ENCODE measurements at regions of chr9 and their contacts with region 1.

Region 1: DNA sequence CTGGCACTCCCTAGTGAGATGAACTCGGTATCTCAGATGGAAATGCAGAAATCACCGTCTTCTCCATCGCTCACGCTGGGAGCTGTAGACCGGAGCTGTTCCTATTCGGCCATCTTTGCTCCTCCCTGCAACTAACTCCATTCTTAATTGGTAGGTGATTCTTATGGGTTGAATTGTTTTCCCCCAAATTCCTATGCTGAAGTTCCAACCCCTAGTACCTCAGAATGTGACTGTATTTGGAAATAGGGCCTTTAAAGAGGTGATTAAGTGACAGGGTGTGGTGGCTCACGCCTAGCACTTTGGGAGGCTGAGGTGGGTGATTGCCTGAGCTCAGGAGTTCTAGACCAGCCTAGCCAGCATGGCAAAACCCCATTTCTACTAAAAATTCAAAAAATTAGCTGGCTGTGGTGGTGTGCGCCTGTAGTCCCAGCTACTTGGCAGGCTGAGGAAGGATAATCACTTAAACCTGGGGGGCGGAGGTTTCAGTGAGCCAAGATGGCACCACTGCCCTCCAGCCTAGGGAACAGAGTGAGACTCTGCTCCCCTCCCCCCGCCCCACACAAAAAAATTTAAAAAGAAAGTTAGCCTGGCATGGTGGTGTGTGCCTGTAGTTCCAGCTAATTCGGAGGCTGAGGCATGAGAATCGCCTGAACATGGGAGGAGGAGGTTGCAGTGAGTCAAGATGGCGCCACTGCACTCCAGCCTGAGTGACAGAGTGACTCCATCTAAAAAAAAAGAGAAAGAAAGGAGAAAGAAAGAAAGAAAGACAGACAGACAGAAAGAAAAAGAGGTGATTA is 25.2 kb upstream of the FOCAD start:
- DNase-seq: no peak
- ATAC-seq: peak; percentile 56
- H3K4me3 ChIP-seq: peak overlapping the region; percentile 76
- H3K27ac ChIP-seq: peak overlapping the region; percentile 88
- H3K4me1 ChIP-seq: no peaks in the 10 kb centered on the region
- H3K27me3 ChIP-seq: no peaks in the 10 kb centered on the region
- CTCF ChIP-seq: no peak
- EP300 ChIP-seq: no peak
- POLR2A ChIP-seq: no peak
- RAD21 ChIP-seq: no peak

Region 2: DNA sequence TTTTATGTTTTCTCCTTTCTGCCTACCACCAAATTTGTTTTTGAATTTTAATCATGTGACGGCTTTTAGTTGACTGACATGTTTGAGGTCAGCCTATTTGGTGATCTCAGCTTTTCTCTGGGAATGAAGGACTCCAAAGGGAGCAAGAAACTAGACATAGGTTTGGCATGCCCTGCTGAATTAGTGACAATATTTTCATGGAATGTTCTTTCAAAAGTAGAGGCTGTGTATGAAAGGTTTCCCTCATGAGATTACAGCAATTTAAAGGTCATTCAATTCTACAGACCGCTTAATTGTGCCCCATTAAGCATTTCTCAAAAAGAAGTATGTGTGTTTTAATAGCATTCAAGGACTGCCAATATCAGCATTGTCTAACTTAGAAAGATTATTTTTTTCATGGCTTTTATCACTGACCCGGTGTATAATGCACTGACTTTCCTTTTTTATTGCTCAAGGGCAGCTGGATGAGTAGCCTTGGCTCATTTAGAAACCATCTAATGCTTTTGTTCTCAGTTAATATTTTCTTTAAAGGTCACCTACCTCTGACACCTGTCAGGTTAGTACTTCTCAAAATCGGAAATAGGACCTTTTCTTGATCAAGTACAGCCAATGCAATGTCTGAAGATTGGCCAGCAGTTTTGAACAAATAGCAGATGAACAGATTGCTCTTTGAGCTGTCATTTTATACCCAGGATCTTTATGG is 28.5 kb before region 1 on chr9:
- CTCF ChIA-PET with region 1: interaction called, 16 read pairs
- POLR2A ChIA-PET with region 1: interaction called, 7 read pairs
- RAD21 ChIA-PET with region 1: interaction called, 176 read pairs
- SMC1A ChIA-PET with region 1: interaction called, 47 read pairs
- in situ Hi-C with region 1: no loop called
- intact Hi-C with region 1: no loop called
- DNase-seq: no peak
- ATAC-seq: peak; percentile 51
- H3K4me3 ChIP-seq: no peak overlapping the region
- H3K27ac ChIP-seq: no peak overlapping the region
- H3K4me1 ChIP-seq: no peaks in the 10 kb centered on the region
- H3K27me3 ChIP-seq: no peaks in the 10 kb centered on the region
- CTCF ChIP-seq: no peak
- EP300 ChIP-seq: no peak
- POLR2A ChIP-seq: no peak
- RAD21 ChIP-seq: no peak

Measured in GM12878 (cell line).